Gastrocnemius medialis (tissue), 4 donors: ENCODE measurements at regions of chr2 and their contacts with region 1.

Region 1: DNA sequence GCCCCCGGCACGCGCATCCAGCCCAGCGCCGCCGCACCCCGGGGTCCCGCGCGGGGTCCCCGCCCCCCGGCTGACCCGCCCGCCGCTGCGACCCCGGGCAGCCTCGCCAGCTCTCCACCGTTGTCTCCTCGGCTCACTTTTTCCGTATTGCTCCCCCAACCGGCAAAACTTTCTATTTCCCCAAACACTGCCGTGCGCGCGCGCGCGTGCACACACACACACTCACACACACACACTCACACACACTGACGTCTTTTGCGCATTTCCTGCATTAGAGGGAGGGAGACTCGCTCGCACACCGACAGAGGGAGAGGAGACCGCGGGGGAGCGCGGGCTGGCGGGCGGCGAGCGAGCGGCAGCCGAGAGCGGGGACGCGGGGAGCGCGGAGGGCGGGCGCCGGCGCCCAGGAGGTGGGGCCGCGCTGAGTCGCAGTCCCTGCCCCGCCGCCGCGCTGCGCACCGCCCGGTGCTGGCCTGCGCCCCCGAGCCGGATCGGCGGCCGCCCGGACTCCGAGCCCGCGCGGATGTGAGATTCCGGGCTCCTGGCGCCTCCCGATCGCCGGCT is 542 bp upstream of the PRKCE start:
- DNase-seq: peak; percentile 91 to 92
- ATAC-seq: peak; percentile 77 to 82
- H3K4me3 ChIP-seq: peak overlapping the region; percentile 74 to 93 (median 84)
- H3K27ac ChIP-seq: peak overlapping the region; percentile 93 to 100 (median 94)
- H3K4me1 ChIP-seq: peaks cover 24 to 33% of the 10 kb centered on the region in 2 donors
- H3K27me3 ChIP-seq: no peaks in the 10 kb centered on the region
- CTCF ChIP-seq: peak in 4 of 5 experiments; percentile 39 to 69 (median 56)
- POLR2A ChIP-seq: peak; percentile 97 to 98

Region 2: GRCh38 chr2:45681675-45682074 is 30.7 kb after region 1 on chr2:
- in situ Hi-C with region 1: no loop called
- intact Hi-C with region 1: loop called (anchors 2 kb)
- DNase-seq: peak; percentile 64 to 68
- ATAC-seq: peak; percentile 92 to 98
- H3K4me3 ChIP-seq: no peak overlapping the region
- H3K27ac ChIP-seq: peak overlapping the region; percentile 56 to 79 (median 76)
- H3K4me1 ChIP-seq: peaks cover 42 to 44% of the 10 kb centered on the region in 2 donors
- H3K27me3 ChIP-seq: no peaks in the 10 kb centered on the region
- CTCF ChIP-seq: no peak
- POLR2A ChIP-seq: no peak

Region 3: GRCh38 chr2:45706033-45706432 is 55.1 kb after region 1 on chr2:
- in situ Hi-C with region 1: no loop called
- intact Hi-C with region 1: loop called (anchors 2 kb)
- DNase-seq: no peak
- ATAC-seq: no peak
- H3K4me3 ChIP-seq: no peak overlapping the region
- H3K27ac ChIP-seq: no peak overlapping the region
- H3K4me1 ChIP-seq: peaks cover 27 to 48% of the 10 kb centered on the region in 2 donors
- H3K27me3 ChIP-seq: no peaks in the 10 kb centered on the region
- CTCF ChIP-seq: no peak
- POLR2A ChIP-seq: no peak

Region 4: GRCh38 chr2:45724335-45724734 is 73.4 kb after region 1 on chr2:
- in situ Hi-C with region 1: no loop called
- intact Hi-C with region 1: no loop called
- DNase-seq: no peak
- ATAC-seq: no peak
- H3K4me3 ChIP-seq: no peak overlapping the region
- H3K27ac ChIP-seq: no peak overlapping the region
- H3K4me1 ChIP-seq: peaks cover 7 to 22% of the 10 kb centered on the region in 2 donors
- H3K27me3 ChIP-seq: no peaks in the 10 kb centered on the region
- CTCF ChIP-seq: no peak
- POLR2A ChIP-seq: no peak

Region 5: GRCh38 chr2:45821564-45822271 is 170.8 kb after region 1 on chr2:
- in situ Hi-C with region 1: no loop called
- intact Hi-C with region 1: loop called (anchors 1 kb)
- DNase-seq: peak; percentile 91 to 93
- ATAC-seq: peak; percentile 63 to 78
- H3K4me3 ChIP-seq: no peak overlapping the region
- H3K27ac ChIP-seq: peak overlapping the region; percentile 87 to 91 (median 88)
- H3K4me1 ChIP-seq: peaks cover 37 to 53% of the 10 kb centered on the region in 2 donors
- H3K27me3 ChIP-seq: no peaks in the 10 kb centered on the region
- CTCF ChIP-seq: no peak
- POLR2A ChIP-seq: peak in 1 of 2 donors; percentile 34

Region 6: DNA sequence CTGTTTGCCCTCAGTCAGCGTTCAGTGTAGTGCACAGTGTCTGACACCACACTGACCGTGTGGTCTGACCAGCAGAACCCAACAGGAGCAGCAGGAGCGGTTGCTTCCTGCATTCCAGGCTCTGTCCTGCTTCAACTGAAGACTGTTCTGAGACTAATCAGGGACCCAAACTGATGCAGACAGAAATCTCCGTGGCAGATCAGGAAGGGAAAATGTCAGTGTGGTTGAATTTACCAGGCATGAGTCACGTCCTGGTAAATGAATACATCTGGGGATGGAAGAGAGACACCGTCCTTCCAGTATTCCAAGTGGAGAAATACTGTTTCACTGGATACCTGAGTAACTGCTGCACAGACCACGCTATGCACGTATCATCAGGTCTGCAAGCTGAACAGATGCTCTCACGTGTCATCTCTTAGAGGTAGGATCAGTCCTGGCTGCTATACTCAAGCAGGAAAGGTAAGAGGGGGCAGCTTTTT is 422.6 kb after region 1 on chr2:
- in situ Hi-C with region 1: no loop called
- intact Hi-C with region 1: no loop called
- DNase-seq: no peak
- ATAC-seq: peak in 1 of 2 donors; percentile 35
- H3K4me3 ChIP-seq: no peak overlapping the region
- H3K27ac ChIP-seq: peak overlapping the region in 2 of 4 donors; percentile 19 to 28
- H3K4me1 ChIP-seq: peaks cover 2 to 4% of the 10 kb centered on the region in 2 donors
- H3K27me3 ChIP-seq: no peaks in the 10 kb centered on the region
- CTCF ChIP-seq: no peak
- POLR2A ChIP-seq: no peak

Region 7: DNA sequence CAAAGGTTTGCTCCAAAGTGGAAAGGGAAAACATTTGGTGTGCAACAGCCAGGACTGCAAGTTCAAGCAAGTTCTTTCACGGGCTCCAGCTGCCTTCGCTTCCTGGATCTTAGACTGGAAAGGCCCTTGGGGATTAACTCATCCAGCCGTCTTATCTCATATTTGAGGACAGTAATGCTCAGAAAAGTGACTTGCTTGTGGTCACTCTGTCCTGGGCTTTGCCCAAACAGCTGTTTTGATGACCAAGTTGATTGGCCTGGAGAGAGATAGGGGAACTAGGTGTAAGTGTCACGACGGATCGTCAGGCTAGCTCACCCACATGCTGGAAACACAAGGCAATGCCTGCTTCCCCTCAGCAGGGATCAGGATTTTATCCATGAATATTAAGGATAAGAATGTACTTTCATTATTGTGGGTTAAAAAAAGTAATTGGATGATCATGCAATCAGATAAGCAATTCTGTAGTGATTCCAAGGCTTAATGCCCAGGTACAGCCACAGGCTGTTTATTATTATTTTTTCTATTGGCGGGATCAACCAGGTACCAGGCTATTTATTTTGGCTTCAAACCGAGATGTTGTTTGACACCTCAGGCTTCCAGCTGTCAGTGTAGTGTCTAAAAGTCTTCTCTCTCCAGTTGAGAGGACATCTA is 483.7 kb after region 1 on chr2:
- in situ Hi-C with region 1: no loop called
- intact Hi-C with region 1: no loop called
- DNase-seq: peak in 1 of 2 donors; percentile 33
- ATAC-seq: peak; percentile 39 to 71
- H3K4me3 ChIP-seq: no peak overlapping the region
- H3K27ac ChIP-seq: peak overlapping the region in 3 of 4 donors; percentile 16 to 62 (median 57)
- H3K4me1 ChIP-seq: peaks cover 19 to 20% of the 10 kb centered on the region in 2 donors
- H3K27me3 ChIP-seq: no peaks in the 10 kb centered on the region
- CTCF ChIP-seq: no peak
- POLR2A ChIP-seq: no peak

Region 8: DNA sequence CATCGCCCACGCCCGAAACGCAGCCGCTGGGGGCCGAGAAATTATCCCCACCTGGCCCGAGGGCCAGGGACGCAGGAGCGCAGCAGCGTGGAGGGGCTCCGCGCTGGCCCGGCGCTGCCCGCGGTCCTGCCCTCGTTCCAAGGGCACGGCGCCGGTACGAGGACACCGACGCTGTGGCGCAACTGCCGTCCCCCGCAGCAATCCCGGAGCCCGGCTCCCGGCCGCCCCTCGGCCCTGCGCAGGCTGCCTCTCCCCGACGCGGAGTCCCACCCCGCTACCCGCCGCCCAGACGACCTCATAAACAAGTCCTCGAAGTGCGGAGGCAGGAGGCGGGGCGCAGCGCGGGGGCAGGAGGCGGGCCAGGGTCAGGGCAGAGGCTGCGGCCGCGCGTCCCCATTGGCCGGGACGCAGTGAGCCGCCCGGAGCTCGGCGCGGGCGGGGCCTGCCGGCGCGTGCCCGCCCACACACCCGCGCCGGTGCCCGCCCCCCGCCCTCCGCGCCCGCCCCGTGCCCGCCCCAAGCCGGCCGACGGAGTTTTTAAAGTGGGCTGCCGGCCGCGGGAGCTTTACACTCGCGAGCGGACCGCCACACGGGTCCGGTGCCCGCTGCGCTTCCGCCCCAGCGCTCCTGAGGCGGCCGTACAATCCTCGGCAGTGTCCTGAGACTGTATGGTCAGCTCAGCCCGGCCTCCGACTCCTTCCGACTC is 646.1 kb after region 1 on chr2 and contains the start of gene EPAS1:
- in situ Hi-C with region 1: no loop called
- intact Hi-C with region 1: loop called (anchors 5 kb)
- DNase-seq: peak; percentile 91 to 92
- ATAC-seq: peak; percentile 75 to 76
- H3K4me3 ChIP-seq: peak within 1 kb of the TSS; percentile 81 to 99 (median 94)
- H3K27ac ChIP-seq: peak within 1 kb of the TSS; percentile 91 to 98 (median 97)
- H3K4me1 ChIP-seq: peaks cover 16 to 23% of the 10 kb centered on the region in 2 donors
- H3K27me3 ChIP-seq: no peaks in the 10 kb centered on the region
- CTCF ChIP-seq: no peak
- POLR2A ChIP-seq: peak; percentile 78 to 95
- total RNA-seq, gene EPAS1: 61.5 to 95.1 (median 90.0) TPM